ENCODE measurements at regions of chr20 and their contacts with region 1.

Region 1: GRCh38 chr20:63574156-63574828 is at the start of gene HELZ2:
- DNase-seq: peak; percentile 76 to 78
- H3K4me3 ChIP-seq: peak within 1 kb of the TSS in 2 of 3 donors; percentile 50 to 83
- H3K27ac ChIP-seq: peak within 1 kb of the TSS; percentile 58 to 72 (median 72)
- H3K4me1 ChIP-seq: peaks cover 10 to 30% of the 10 kb centered on the region in 2 donors
- H3K27me3 ChIP-seq: no peaks in the 10 kb centered on the region
- CTCF ChIP-seq: no peak
- POLR2A ChIP-seq: peak in 1 of 2 donors; percentile 21
- total RNA-seq, gene HELZ2: 24.3 to 45.5 (median 36.0) TPM

Region 2: GRCh38 chr20:63641792-63642544 is 67.7 kb after region 1 on chr20:
- intact Hi-C with region 1: loop called (anchors 10 kb)
- DNase-seq: peak; percentile 94 to 96
- H3K4me3 ChIP-seq: peak overlapping the region in 2 of 3 donors; percentile 8 to 41
- H3K27ac ChIP-seq: peak overlapping the region; percentile 82 to 93 (median 83)
- H3K4me1 ChIP-seq: peaks cover 10 to 23% of the 10 kb centered on the region in 2 donors
- H3K27me3 ChIP-seq: no peaks in the 10 kb centered on the region
- CTCF ChIP-seq: peak in 4 of 6 experiments; percentile 41 to 83 (median 66)
- POLR2A ChIP-seq: peak in 1 of 2 donors; percentile 71

Measured in thyroid gland (tissue), 4 donors.